CD8-positive, alpha-beta memory T cell (primary cell): ENCODE measurements at regions of chr12 and their contacts with region 1.

Region 1: GRCh38 chr12:122471324-122472226 is 29.2 kb downstream of the ZCCHC8 start:
- DNase-seq: peak in 3 of 5 donors; percentile 47 to 56 (median 54)
- H3K4me3 ChIP-seq: no peak overlapping the region
- H3K4me3 Mint-ChIP-seq: no peak overlapping the region
- H3K27ac ChIP-seq: no peak overlapping the region
- H3K27ac Mint-ChIP-seq: peak overlapping the region in 7 of 8 donors; percentile 10 to 56 (median 33)
- H3K4me1 ChIP-seq: no peaks in the 10 kb centered on the region
- H3K4me1 Mint-ChIP-seq: peaks cover 1 to 12% (median 10%) of the 10 kb centered on the region in 3 donors
- H3K27me3 ChIP-seq: no peaks in the 10 kb centered on the region
- H3K27me3 Mint-ChIP-seq: no peaks in the 10 kb centered on the region

Region 2: GRCh38 chr12:122413516-122414404 is 57.8 kb before region 1 on chr12:
- CTCF ChIA-PET with region 1: interaction called, 10 read pairs
- POLR2A ChIA-PET with region 1: no interaction called
- DNase-seq: no peak
- H3K4me3 ChIP-seq: no peak overlapping the region
- H3K4me3 Mint-ChIP-seq: peak overlapping the region in 1 of 7 donors; percentile 73
- H3K27ac ChIP-seq: no peak overlapping the region
- H3K27ac Mint-ChIP-seq: peak overlapping the region in 6 of 8 donors; percentile 22 to 87 (median 52)
- H3K4me1 ChIP-seq: peaks cover 20% of the 10 kb centered on the region
- H3K4me1 Mint-ChIP-seq: peaks cover 26 to 45% (median 34%) of the 10 kb centered on the region in 3 donors
- H3K27me3 ChIP-seq: no peaks in the 10 kb centered on the region
- H3K27me3 Mint-ChIP-seq: no peaks in the 10 kb centered on the region

Region 3: GRCh38 chr12:122421821-122422729 is 49.5 kb before region 1 on chr12 and contains the start of gene CLIP1:
- CTCF ChIA-PET with region 1: interaction called, 11 read pairs
- POLR2A ChIA-PET with region 1: no interaction called
- DNase-seq: peak; percentile 46 to 72 (median 56)
- H3K4me3 ChIP-seq: peak within 1 kb of the TSS; percentile 80
- H3K4me3 Mint-ChIP-seq: peak within 1 kb of the TSS; percentile 87 to 97 (median 93)
- H3K27ac ChIP-seq: peak within 1 kb of the TSS; percentile 76
- H3K27ac Mint-ChIP-seq: peak within 1 kb of the TSS; percentile 84 to 98 (median 89)
- H3K4me1 ChIP-seq: peaks cover 27% of the 10 kb centered on the region
- H3K4me1 Mint-ChIP-seq: peaks cover 26 to 45% (median 37%) of the 10 kb centered on the region in 3 donors
- H3K27me3 ChIP-seq: no peaks in the 10 kb centered on the region
- H3K27me3 Mint-ChIP-seq: peaks cover 0 to 3% of the 10 kb centered on the region in 2 donors
- total RNA-seq, gene CLIP1: 43.9 to 48.2 TPM